Activated naive CD4-positive, alpha-beta T cell treated with anti-CD3 and anti-CD28 coated beads for 36 hours (primary cell): ENCODE measurements at regions of chr1 and their contacts with region 1.

Region 1: GRCh38 chr1:2525920-2526823 is at the start of gene PANK4:
- DNase-seq: peak; percentile 90
- H3K4me3 Mint-ChIP-seq: peak within 1 kb of the TSS; percentile 87
- H3K27ac Mint-ChIP-seq: peak within 1 kb of the TSS; percentile 97
- H3K4me1 Mint-ChIP-seq: peaks cover 47% of the 10 kb centered on the region
- H3K27me3 Mint-ChIP-seq: peaks cover 3% of the 10 kb centered on the region
- total RNA-seq, gene PANK4: 46.6 to 51.4 TPM

Region 2: GRCh38 chr1:2494323-2494693 is 31.9 kb before region 1 on chr1:
- CTCF ChIA-PET with region 1: no interaction called
- intact Hi-C with region 1: no loop called
- DNase-seq: no peak
- H3K4me3 Mint-ChIP-seq: no peak overlapping the region
- H3K27ac Mint-ChIP-seq: no peak overlapping the region
- H3K4me1 Mint-ChIP-seq: peaks cover 13% of the 10 kb centered on the region
- H3K27me3 Mint-ChIP-seq: no peaks in the 10 kb centered on the region

Region 3: GRCh38 chr1:2642560-2643413 is 116.6 kb after region 1 on chr1:
- CTCF ChIA-PET with region 1: no interaction called
- intact Hi-C with region 1: loop called (anchors 1 kb)
- DNase-seq: peak; percentile 97
- H3K4me3 Mint-ChIP-seq: peak overlapping the region; percentile 90
- H3K27ac Mint-ChIP-seq: peak overlapping the region; percentile 88
- H3K4me1 Mint-ChIP-seq: peaks cover 6% of the 10 kb centered on the region
- H3K27me3 Mint-ChIP-seq: no peaks in the 10 kb centered on the region

Region 4: DNA sequence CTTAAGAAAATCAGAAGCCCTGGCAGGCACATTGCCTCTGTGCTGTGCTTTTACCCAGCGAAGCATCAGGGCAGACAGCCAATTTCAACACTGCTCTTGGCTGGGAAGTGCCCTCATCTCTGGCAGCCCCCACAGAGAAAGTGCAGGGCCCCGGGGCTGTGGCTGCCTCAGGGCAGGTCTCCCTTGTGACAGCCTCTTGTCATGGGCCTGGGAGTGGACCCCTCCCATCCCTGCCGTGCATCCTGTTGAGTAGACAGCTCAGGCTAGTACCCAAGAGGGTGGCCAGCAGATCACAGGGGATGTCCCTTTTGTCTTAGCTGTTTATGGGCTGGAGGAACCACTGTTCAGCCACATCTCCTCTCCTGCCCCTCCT is 252.0 kb after region 1 on chr1:
- CTCF ChIA-PET with region 1: no interaction called
- intact Hi-C with region 1: no loop called
- DNase-seq: no peak
- H3K4me3 Mint-ChIP-seq: no peak overlapping the region
- H3K27ac Mint-ChIP-seq: no peak overlapping the region
- H3K4me1 Mint-ChIP-seq: no peaks in the 10 kb centered on the region
- H3K27me3 Mint-ChIP-seq: peaks cover 22% of the 10 kb centered on the region